Activated CD4-positive, alpha-beta T cell treated with anti-CD3 and anti-CD28 coated beads, Interleukin-2, amount 10 ng/mL, durations not matched to agents 24 days and 14 days (primary cell): ENCODE measurements at regions of chr5 and their contacts with region 1.

Region 1: DNA sequence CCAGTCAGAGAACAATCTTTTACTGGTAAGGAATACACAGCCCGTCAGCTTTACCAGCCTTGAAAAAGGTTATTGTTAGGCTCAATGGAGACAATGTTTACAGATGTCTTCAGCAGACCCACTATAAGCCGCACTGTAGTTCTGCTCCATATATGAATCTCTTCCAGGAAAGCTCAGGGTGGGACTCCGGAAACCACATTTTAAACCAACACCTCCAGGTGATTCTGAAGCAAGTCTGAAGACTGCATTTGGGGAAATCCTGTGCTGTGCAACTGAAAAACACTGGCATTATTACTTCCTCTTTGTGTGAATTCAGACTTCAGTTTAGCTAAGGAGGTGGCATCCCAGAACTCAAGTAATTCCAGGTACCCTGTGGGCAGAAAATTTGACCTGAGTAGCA is 3.5 kb downstream of the GZMK start:
- DNase-seq: peak; percentile 90
- H3K4me3 Mint-ChIP-seq: peak overlapping the region; percentile 67
- H3K27ac Mint-ChIP-seq: peak overlapping the region; percentile 84
- H3K4me1 Mint-ChIP-seq: peaks cover 71% of the 10 kb centered on the region
- H3K27me3 Mint-ChIP-seq: no peaks in the 10 kb centered on the region

Region 2: DNA sequence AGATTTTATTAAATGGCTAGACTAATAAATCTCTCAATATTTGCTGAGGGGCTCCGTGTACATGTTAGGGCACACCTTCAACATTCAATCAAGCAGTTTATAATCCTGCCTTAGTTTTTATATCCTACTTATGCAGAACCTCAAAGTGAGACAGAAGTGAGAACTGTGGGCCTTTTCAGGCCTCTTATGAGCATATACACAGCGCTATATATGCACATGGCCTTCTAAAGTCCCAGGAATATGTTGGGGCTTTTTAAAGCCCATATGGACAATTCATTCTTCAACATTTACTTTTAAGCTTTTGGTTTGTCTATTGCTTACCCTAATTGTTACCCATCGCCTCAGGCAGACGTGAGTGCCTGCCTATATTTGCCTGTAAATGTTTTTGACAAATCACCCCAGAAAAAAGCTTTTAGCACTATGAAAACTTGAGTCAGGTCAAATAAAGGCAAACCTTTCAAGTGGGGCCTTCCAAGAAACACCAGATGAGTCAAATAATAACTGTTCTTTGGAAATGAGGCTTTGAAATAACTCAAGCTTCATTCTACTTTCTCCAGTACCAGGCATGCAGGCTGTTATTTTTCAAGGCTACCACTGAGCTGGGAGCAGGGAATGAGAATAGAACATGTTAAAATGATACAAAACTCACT is 100.4 kb before region 1 on chr5:
- intact Hi-C with region 1: loop called (anchors 1 kb)
- DNase-seq: no peak
- H3K4me3 Mint-ChIP-seq: peak overlapping the region; percentile 16
- H3K27ac Mint-ChIP-seq: peak overlapping the region; percentile 64
- H3K4me1 Mint-ChIP-seq: peaks cover 8% of the 10 kb centered on the region
- H3K27me3 Mint-ChIP-seq: peaks cover 8% of the 10 kb centered on the region

Region 3: GRCh38 chr5:55551358-55551757 is 523.8 kb after region 1 on chr5:
- intact Hi-C with region 1: no loop called
- DNase-seq: no peak
- H3K4me3 Mint-ChIP-seq: no peak overlapping the region
- H3K27ac Mint-ChIP-seq: no peak overlapping the region
- H3K4me1 Mint-ChIP-seq: peaks cover 10% of the 10 kb centered on the region
- H3K27me3 Mint-ChIP-seq: peaks cover 9% of the 10 kb centered on the region